Sigmoid colon (tissue), 7 donors: ENCODE measurements at regions of chr2 and their contacts with region 1.

Region 1: GRCh38 chr2:238596571-238597551 is 170.1 kb downstream of the ASB1 start:
- DNase-seq: peak; percentile 93
- H3K4me3 ChIP-seq: no peak overlapping the region
- H3K27ac ChIP-seq: peak overlapping the region; percentile 80 to 91 (median 85)
- H3K4me1 ChIP-seq: peaks cover 0 to 60% (median 48%) of the 10 kb centered on the region in 4 donors
- H3K27me3 ChIP-seq: no peaks in the 10 kb centered on the region
- CTCF ChIP-seq: no peak
- EP300 ChIP-seq: peak; percentile 92 to 99 (median 97)
- POLR2A ChIP-seq: no peak

Region 2: GRCh38 chr2:237886685-237887481 is 710.0 kb before region 1 on chr2:
- intact Hi-C with region 1: loop called (anchors 5 kb)
- DNase-seq: peak; percentile 100
- H3K4me3 ChIP-seq: peak overlapping the region in 2 of 4 donors; percentile 13 to 23
- H3K27ac ChIP-seq: peak overlapping the region; percentile 91 to 97 (median 96)
- H3K4me1 ChIP-seq: peaks cover 0 to 78% (median 68%) of the 10 kb centered on the region in 4 donors
- H3K27me3 ChIP-seq: no peaks in the 10 kb centered on the region
- CTCF ChIP-seq: no peak
- EP300 ChIP-seq: peak; percentile 99 to 100 (median 100)
- POLR2A ChIP-seq: no peak

Region 3: GRCh38 chr2:238426568-238427434 is 170.1 kb before region 1 on chr2 and contains the start of gene ASB1:
- intact Hi-C with region 1: loop called (anchors 5 kb)
- DNase-seq: peak; percentile 87
- H3K4me3 ChIP-seq: peak within 1 kb of the TSS; percentile 67 to 90 (median 82)
- H3K27ac ChIP-seq: peak within 1 kb of the TSS; percentile 84 to 91 (median 88)
- H3K4me1 ChIP-seq: peaks cover 0 to 30% (median 26%) of the 10 kb centered on the region in 4 donors
- H3K27me3 ChIP-seq: no peaks in the 10 kb centered on the region
- CTCF ChIP-seq: no peak
- EP300 ChIP-seq: no peak
- POLR2A ChIP-seq: no peak
- total RNA-seq, gene ASB1: 13.6 to 36.0 (median 15.3) TPM

Region 4: DNA sequence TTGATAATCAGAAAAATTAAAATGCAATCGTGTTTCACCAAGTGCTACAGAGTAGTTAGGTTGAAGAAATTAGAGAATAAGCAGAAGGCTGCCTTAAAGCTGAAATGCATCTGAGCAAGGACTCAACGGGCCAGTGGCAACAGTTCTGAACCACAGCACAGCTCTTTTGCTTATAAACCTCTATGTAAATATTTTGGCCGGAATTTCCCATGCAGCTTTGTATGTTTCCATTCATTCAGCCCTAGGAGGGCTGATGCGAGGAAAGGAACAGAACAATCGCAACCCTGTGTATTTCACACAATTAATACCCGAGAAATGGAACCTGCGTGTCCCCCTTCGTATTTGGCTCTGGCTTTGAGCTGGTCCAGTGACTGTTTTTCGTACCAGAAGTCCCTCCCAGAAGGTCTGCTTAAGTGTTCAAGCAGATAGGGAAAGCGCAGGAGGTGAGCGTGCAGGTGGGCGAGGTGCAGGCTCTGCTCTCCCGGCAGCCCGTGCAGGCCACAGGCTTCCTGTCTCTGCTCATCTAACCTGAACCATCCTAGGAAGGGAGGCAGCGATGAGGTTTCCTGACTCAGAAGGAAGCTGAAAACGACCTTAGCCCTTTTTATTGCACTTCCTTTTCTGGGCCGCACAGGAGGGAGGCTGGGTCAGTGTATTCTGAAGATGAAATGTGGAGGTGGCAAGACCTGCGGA is 102.8 kb before region 1 on chr2:
- intact Hi-C with region 1: no loop called
- DNase-seq: no peak
- H3K4me3 ChIP-seq: no peak overlapping the region
- H3K27ac ChIP-seq: no peak overlapping the region
- H3K4me1 ChIP-seq: peaks cover 0 to 21% (median 17%) of the 10 kb centered on the region in 4 donors
- H3K27me3 ChIP-seq: no peaks in the 10 kb centered on the region
- CTCF ChIP-seq: no peak
- EP300 ChIP-seq: no peak
- POLR2A ChIP-seq: no peak

Region 5: GRCh38 chr2:238644095-238645081 is 47.5 kb after region 1 on chr2:
- intact Hi-C with region 1: loop called (anchors 2 kb)
- DNase-seq: no peak
- H3K4me3 ChIP-seq: no peak overlapping the region
- H3K27ac ChIP-seq: peak overlapping the region; percentile 72 to 90 (median 83)
- H3K4me1 ChIP-seq: peaks cover 0 to 35% (median 30%) of the 10 kb centered on the region in 4 donors
- H3K27me3 ChIP-seq: no peaks in the 10 kb centered on the region
- CTCF ChIP-seq: no peak
- EP300 ChIP-seq: peak; percentile 53 to 92 (median 82)
- POLR2A ChIP-seq: no peak

Region 6: GRCh38 chr2:238728330-238729260 is 131.7 kb after region 1 on chr2:
- intact Hi-C with region 1: loop called (anchors 2 kb)
- DNase-seq: peak; percentile 85
- H3K4me3 ChIP-seq: no peak overlapping the region
- H3K27ac ChIP-seq: peak overlapping the region; percentile 81 to 95 (median 94)
- H3K4me1 ChIP-seq: peaks cover 0 to 63% (median 60%) of the 10 kb centered on the region in 4 donors
- H3K27me3 ChIP-seq: no peaks in the 10 kb centered on the region
- CTCF ChIP-seq: no peak
- EP300 ChIP-seq: peak in 2 of 4 donors; percentile 58 to 75
- POLR2A ChIP-seq: no peak